ENCODE measurements at regions of chr5 and their contacts with region 1.

Region 1: DNA sequence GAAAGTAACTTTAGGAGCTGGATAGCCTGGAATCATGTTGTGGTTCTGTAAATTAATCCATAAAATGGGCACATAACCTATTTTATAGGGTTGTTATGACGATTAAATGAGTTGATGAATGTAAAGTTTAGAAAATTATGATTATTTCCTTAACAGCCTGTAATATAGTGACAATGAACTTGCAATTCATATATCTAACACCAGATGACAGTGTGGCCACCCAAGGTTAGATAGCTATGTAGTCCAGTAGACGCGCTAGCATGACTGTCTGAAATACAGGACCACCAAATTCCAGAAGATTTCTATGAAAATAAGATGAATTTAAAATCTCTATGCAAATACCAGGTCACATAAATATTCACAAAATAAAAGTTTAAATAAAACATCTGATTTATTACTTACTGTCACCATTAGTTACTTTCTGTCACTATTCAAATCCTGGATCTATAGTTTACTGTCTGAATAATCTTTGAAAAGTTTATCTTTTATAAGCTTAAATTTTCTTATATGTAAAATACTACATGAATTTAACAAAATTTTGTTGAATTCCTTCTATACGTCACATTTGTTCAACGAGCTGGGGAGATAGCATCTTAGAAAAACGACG is 26.1 kb upstream of the MACIR start:
- DNase-seq: peak; percentile 50
- H3K4me3 Mint-ChIP-seq: no peak overlapping the region
- H3K27ac Mint-ChIP-seq: no peak overlapping the region
- H3K4me1 Mint-ChIP-seq: peaks cover 5% of the 10 kb centered on the region
- H3K27me3 Mint-ChIP-seq: peaks cover 2% of the 10 kb centered on the region
- CTCF ChIP-seq: peak; percentile 79

Region 2: DNA sequence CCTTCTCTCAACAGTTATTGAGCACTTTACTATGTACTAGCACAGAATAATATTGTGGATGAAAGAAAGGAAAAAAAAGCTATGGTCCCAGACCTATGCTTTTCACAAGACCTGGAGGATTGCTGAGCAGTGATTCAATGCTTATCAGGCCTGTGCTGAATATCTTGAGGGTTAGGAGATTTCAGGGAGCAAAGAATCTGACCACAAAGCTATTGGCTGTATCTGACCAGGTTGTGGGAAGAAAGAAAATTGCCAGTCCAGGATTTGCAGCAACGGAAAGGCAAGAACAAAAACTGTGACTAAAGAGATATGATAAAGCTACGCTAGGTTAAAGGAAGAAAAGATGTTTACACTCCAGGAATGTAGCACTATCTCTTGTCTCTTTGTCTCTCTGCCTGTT is 11.2 kb after region 1 on chr5:
- CTCF ChIA-PET with region 1: interaction called, 11 read pairs
- POLR2A ChIA-PET with region 1: no interaction called
- intact Hi-C with region 1: no loop called
- DNase-seq: no peak
- H3K4me3 Mint-ChIP-seq: no peak overlapping the region
- H3K27ac Mint-ChIP-seq: no peak overlapping the region
- H3K4me1 Mint-ChIP-seq: no peaks in the 10 kb centered on the region
- H3K27me3 Mint-ChIP-seq: peaks cover 36% of the 10 kb centered on the region
- CTCF ChIP-seq: no peak

Measured in MCF 10A (cell line).